GM13976 (cell line): ENCODE measurements at regions of chr3 and their contacts with region 1.

Region 1: DNA sequence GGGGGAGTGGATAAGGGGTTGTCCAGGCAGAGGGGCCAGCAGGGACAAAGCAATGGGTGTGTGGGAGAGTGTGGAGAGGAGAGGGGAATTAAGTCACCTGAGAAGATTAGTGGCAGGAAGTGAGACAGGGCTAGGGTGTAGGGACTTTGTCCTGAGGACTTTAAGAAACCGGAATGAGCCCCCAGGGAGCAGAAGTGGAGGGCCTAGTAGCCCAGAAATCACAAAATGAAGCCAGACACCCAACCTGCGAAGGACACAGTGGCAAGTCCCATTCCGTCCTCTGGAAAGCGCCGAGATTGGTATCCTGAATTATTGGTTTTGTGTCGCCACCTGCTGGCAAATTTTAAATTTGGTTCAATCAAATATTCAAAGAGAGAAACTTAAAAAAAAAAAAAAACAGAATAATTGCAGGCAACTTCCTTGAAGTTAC is 78.0 kb upstream of the SLC25A36 start:
- DNase-seq: peak; percentile 24
- CTCF ChIP-seq: peak; percentile 33

Region 2: GRCh38 chr3:140117096-140117526 is 746.5 kb before region 1 on chr3:
- in situ Hi-C with region 1: loop called (anchors 25 kb)
- DNase-seq: no peak
- CTCF ChIP-seq: no peak

Region 3: DNA sequence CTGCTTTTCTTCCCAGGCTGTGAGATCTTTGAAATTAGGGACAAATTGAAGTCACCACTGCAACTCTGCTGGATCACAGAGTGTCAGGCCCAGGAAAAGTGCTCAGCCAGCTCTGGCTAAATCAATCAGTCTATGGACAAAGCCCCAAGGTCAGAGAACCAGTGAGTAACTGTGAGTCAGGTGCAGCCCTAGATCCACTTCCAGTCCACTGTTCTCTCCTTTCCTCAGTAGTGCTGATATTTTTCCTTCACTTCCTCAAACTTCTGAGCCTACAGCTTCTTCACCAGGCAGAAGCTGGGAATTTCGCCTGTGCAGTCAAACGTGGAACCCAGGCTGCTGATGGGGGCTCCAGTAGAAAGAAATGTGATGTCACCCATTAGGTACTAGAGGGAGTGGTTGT is 260.8 kb before region 1 on chr3:
- in situ Hi-C with region 1: loop called (anchors 25 kb)
- DNase-seq: no peak
- CTCF ChIP-seq: no peak